ENCODE measurements at regions of chr6 and their contacts with region 1.

Region 1: GRCh38 chr6:3456755-3457466 is at the start of gene SLC22A23:
- DNase-seq: peak; percentile 56
- ATAC-seq: peak; percentile 72
- H3K4me3 ChIP-seq: peak within 1 kb of the TSS; percentile 77 to 91 (median 85)
- H3K27ac ChIP-seq: peak within 1 kb of the TSS; percentile 52
- H3K4me1 ChIP-seq: peaks cover 49% of the 10 kb centered on the region
- H3K27me3 ChIP-seq: no peaks in the 10 kb centered on the region; a peak in 1 of 5 replicates
- CTCF ChIP-seq: peak; percentile 78
- EP300 ChIP-seq: no peak
- POLR2A ChIP-seq: peak; percentile 20 to 63; a peak in 3 of 4 replicates
- RAD21 ChIP-seq: peak; percentile 80
- total RNA-seq, gene SLC22A23: 14.4 and 17.5 TPM in 2 replicates

Region 2: GRCh38 chr6:3239110-3239830 is 217.6 kb before region 1 on chr6:
- CTCF ChIA-PET with region 1: no interaction called
- POLR2A ChIA-PET with region 1: no interaction called
- in situ Hi-C with region 1: no loop called
- intact Hi-C with region 1: no loop called
- DNase-seq: no peak
- ATAC-seq: peak; percentile 99
- H3K4me3 ChIP-seq: no peak overlapping the region
- H3K27ac ChIP-seq: no peak overlapping the region
- H3K4me1 ChIP-seq: peaks cover 2% of the 10 kb centered on the region; the same call in 1 of the 2 replicates
- H3K27me3 ChIP-seq: peaks cover 9 to 55% of the 10 kb centered on the region in 2 experiments; a peak in 4 of 5 replicates
- CTCF ChIP-seq: peak; percentile 47
- EP300 ChIP-seq: no peak
- POLR2A ChIP-seq: no peak
- RAD21 ChIP-seq: peak; percentile 67

Region 3: DNA sequence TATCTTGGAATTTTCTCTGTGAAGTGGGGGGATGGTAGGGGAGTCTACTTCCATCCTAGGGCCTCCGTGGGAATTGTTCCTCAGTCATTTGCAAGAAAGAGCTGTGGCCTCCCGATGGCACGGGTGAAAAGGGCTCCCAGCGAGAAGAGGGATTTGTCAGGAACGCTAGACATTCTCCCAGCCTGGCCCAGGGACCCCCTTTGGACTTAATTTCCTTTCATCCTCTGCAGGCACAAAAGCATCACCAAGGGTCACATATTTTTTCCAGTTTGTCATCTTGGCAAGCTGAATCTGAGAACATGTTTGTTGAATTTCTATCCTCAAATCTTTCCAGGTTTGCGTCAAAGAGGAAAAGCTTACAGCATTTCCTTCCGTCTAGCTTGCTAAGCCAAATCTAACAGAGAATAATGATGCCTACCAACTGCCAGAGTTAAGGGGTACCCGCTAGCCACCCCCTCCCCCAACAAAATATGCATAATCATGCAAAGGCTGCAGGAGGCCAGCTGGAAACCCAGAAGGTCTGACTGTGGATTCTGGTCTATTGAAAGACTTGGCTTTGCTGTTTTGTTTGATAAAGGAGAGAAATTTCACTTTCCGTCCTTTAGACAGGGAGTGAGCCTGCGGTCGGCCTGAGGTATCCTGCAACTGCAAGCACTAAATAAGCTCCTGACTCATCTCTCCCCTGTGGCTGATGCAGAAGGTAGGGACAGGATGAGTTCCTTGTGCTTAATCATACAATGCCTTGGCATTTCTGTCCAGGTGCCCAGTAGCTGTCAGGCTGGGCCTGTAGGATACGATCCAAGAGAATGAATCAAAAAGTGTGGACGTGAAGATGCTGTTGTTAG is 175.1 kb before region 1 on chr6:
- CTCF ChIA-PET with region 1: interaction called, 7 read pairs
- POLR2A ChIA-PET with region 1: no interaction called
- in situ Hi-C with region 1: no loop called
- intact Hi-C with region 1: loop called (anchors 1 kb)
- DNase-seq: no peak
- ATAC-seq: no peak
- H3K4me3 ChIP-seq: no peak overlapping the region
- H3K27ac ChIP-seq: no peak overlapping the region
- H3K4me1 ChIP-seq: no peaks in the 10 kb centered on the region
- H3K27me3 ChIP-seq: no peaks in the 10 kb centered on the region
- CTCF ChIP-seq: no peak
- EP300 ChIP-seq: no peak
- POLR2A ChIP-seq: 0 out of 4 replicates have a peak, but pooled peaks of 1 of the 2 experiments have one; percentile 10
- RAD21 ChIP-seq: no peak

Region 4: DNA sequence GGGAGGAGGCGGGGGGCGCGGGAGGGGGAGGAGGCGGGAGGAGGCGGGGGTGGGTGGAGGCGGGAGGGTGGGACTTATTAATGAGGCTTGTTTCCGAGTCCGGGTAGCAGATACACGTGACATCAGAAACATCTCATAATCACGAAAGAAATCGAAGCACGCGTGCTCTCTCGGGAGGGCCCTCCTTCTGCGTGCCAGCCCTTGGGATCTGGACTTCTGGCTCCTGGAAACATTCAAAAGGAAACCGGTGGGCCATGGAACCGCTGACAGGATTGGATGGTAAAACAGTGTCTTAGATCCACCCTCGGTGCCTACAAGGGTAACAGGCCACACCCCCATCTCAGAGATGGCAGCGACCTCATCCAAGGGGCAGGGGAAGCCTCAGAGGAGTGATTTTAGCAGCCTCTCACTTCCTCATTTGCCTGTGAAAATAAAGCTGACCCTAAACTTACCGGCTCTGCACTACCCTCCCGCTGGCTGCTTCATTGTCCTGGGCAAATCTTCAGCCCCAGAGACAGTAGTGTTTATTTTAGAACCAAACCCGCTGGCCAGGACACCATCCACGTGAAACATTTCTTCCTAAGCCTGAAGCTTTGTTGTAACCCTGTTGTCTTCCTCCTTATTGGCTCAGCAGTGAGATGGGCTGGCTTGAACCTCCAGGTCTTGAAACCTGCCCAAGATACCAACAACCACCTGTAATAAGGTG is 100.7 kb before region 1 on chr6:
- CTCF ChIA-PET with region 1: no interaction called
- POLR2A ChIA-PET with region 1: interaction called, 5 read pairs
- in situ Hi-C with region 1: loop called (anchors 5 kb)
- intact Hi-C with region 1: loop called (anchors 5 kb)
- DNase-seq: peak; percentile 65
- ATAC-seq: peak; percentile 56
- H3K4me3 ChIP-seq: peak overlapping the region; percentile 12 to 47 (median 17); a peak in 5 of 6 replicates
- H3K27ac ChIP-seq: peak overlapping the region; percentile 98
- H3K4me1 ChIP-seq: peaks cover 89% of the 10 kb centered on the region
- H3K27me3 ChIP-seq: no peaks in the 10 kb centered on the region
- CTCF ChIP-seq: no peak
- EP300 ChIP-seq: no peak
- POLR2A ChIP-seq: peak in 1 of 2 experiments; percentile 42; a peak in 1 of 4 replicates
- RAD21 ChIP-seq: no peak

Region 5: GRCh38 chr6:3410385-3411360 is 46.2 kb before region 1 on chr6:
- CTCF ChIA-PET with region 1: interaction called, 8 read pairs
- POLR2A ChIA-PET with region 1: interaction called, 33 read pairs
- in situ Hi-C with region 1: loop called (anchors 5 kb)
- intact Hi-C with region 1: loop called (anchors 2 kb)
- DNase-seq: peak; percentile 95
- ATAC-seq: peak; percentile 71
- H3K4me3 ChIP-seq: peak overlapping the region; percentile 21 to 61 (median 23)
- H3K27ac ChIP-seq: peak overlapping the region; percentile 93
- H3K4me1 ChIP-seq: peaks cover 100% of the 10 kb centered on the region
- H3K27me3 ChIP-seq: no peaks in the 10 kb centered on the region
- CTCF ChIP-seq: peak; percentile 99
- EP300 ChIP-seq: peak in 1 of 2 experiments; percentile 86; a peak in 2 of 4 replicates
- POLR2A ChIP-seq: no peak
- RAD21 ChIP-seq: peak; percentile 84

Region 6: DNA sequence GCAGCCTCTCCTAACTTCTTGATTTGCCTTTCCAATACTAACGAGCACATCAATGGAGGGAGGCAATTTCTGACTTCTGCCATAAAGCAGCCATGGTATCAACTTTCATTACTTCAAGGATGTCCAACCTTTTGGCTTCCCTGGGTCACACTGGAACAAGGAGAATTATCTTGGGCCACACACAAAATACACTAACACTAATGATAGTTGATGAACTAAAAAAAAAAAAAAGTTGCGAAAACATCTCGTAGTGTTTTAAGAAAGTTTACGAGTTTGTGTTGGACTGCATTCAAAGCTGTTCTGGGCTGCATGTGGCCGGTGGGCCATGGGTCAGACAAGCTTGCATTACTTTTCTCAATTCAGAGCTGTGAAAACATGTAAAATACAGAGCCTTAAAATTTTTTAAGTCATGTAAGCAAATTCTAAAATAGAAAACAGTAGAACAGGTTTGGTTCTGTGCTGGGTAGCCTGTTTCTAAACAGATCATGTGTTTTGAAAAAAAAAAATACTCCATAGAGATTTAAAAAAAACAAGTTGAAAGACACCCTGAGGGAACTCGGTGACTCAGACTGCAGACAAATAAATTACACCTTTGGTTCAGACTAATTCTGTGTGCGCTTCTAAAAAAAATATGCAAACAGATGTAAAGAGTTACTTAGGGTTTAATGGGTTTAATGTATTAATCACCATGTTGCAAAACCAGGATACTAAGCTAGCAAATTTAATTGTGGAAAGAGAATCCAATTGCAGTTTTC is 43.5 kb after region 1 on chr6:
- CTCF ChIA-PET with region 1: no interaction called
- POLR2A ChIA-PET with region 1: no interaction called
- in situ Hi-C with region 1: no loop called
- intact Hi-C with region 1: loop called (anchors 5 kb)
- DNase-seq: peak; percentile 42
- ATAC-seq: no peak
- H3K4me3 ChIP-seq: no peak overlapping the region
- H3K27ac ChIP-seq: no peak overlapping the region
- H3K4me1 ChIP-seq: peaks cover 62% of the 10 kb centered on the region
- H3K27me3 ChIP-seq: no peaks in the 10 kb centered on the region
- CTCF ChIP-seq: no peak
- EP300 ChIP-seq: no peak; a peak in 1 of 4 replicates
- POLR2A ChIP-seq: no peak
- RAD21 ChIP-seq: no peak